OCI-LY7 (cell line): ENCODE measurements at regions of chr17 and their contacts with region 1.

Region 1: DNA sequence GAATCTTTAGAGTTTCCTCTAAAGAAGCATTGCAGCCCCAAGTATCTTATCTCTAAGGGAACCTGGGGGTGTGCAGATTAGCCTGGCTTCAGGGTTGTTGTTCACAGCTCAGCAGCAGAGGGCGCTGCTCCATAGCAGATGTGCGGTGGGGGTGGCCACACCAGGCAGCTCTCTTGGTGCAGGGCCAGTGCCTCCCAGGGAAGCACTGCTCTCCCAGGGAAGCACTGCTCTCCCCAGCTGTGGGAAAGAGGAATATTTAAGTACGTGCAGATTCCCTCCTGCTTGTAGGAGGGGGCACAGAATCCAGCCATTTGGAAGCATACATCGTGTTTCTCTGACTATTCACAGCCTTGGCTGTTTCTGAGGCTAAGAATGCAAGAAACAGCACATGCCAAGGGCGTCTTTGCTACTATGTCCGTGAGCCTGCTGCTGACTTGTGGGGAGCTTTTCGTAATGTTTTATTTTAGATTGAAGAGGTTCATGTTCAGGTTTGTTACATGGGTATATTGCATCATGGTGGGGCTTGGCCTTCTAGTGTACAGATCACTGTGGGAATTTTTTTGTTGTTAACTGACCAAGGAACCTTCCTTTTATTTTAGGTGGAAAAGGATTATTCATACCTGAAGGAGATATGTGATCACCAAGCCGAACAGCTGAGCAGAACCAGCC is 217.8 kb downstream of the SPECC1 start:
- DNase-seq: peak; percentile 59
- H3K4me3 ChIP-seq: no peak overlapping the region
- H3K27ac ChIP-seq: no peak overlapping the region
- H3K4me1 ChIP-seq: no peaks in the 10 kb centered on the region
- CTCF ChIP-seq: peak; percentile 86

Region 2: GRCh38 chr17:20244671-20245070 is 17.7 kb after region 1 on chr17:
- CTCF ChIA-PET with region 1: no interaction called
- POLR2A ChIA-PET with region 1: no interaction called
- intact Hi-C with region 1: no loop called
- DNase-seq: no peak
- H3K4me3 ChIP-seq: no peak overlapping the region
- H3K27ac ChIP-seq: no peak overlapping the region
- H3K4me1 ChIP-seq: no peaks in the 10 kb centered on the region
- CTCF ChIP-seq: no peak

Region 3: GRCh38 chr17:20300436-20300934 is 73.5 kb after region 1 on chr17:
- CTCF ChIA-PET with region 1: no interaction called
- POLR2A ChIA-PET with region 1: no interaction called
- intact Hi-C with region 1: no loop called
- DNase-seq: no peak
- H3K4me3 ChIP-seq: no peak overlapping the region
- H3K27ac ChIP-seq: no peak overlapping the region
- H3K4me1 ChIP-seq: no peaks in the 10 kb centered on the region
- CTCF ChIP-seq: no peak

Region 4: GRCh38 chr17:20315821-20316220 is 88.9 kb after region 1 on chr17:
- CTCF ChIA-PET with region 1: no interaction called
- POLR2A ChIA-PET with region 1: no interaction called
- intact Hi-C with region 1: loop called (anchors 2 kb)
- DNase-seq: no peak
- H3K4me3 ChIP-seq: no peak overlapping the region
- H3K27ac ChIP-seq: no peak overlapping the region
- H3K4me1 ChIP-seq: no peaks in the 10 kb centered on the region
- CTCF ChIP-seq: no peak

Region 5: GRCh38 chr17:20852239-20852989 is 625.5 kb after region 1 on chr17:
- CTCF ChIA-PET with region 1: no interaction called
- POLR2A ChIA-PET with region 1: no interaction called
- intact Hi-C with region 1: loop called (anchors 5 kb)
- DNase-seq: no peak
- H3K4me3 ChIP-seq: no peak overlapping the region
- H3K27ac ChIP-seq: no peak overlapping the region
- H3K4me1 ChIP-seq: no peaks in the 10 kb centered on the region
- CTCF ChIP-seq: no peak

Region 6: GRCh38 chr17:20992987-20993862 is 766.3 kb after region 1 on chr17:
- CTCF ChIA-PET with region 1: no interaction called
- POLR2A ChIA-PET with region 1: no interaction called
- intact Hi-C with region 1: loop called (anchors 2 kb)
- DNase-seq: peak; percentile 74
- H3K4me3 ChIP-seq: no peak overlapping the region
- H3K27ac ChIP-seq: no peak overlapping the region
- H3K4me1 ChIP-seq: no peaks in the 10 kb centered on the region
- CTCF ChIP-seq: peak; percentile 89